ENCODE measurements at regions of chr17 and their contacts with region 1.

Region 1: GRCh38 chr17:7515911-7516610 is 31.9 kb downstream of the POLR2A start:
- DNase-seq: no peak
- ATAC-seq: no peak
- H3K4me3 ChIP-seq: no peak overlapping the region
- H3K4me3 Mint-ChIP-seq: no peak overlapping the region
- H3K27ac ChIP-seq: no peak overlapping the region
- H3K27ac Mint-ChIP-seq: peak overlapping the region in 3 of 9 donors; percentile 12 to 74 (median 45)
- H3K4me1 ChIP-seq: no peaks in the 10 kb centered on the region
- H3K4me1 Mint-ChIP-seq: peaks cover 0 to 7% (median 0%) of the 10 kb centered on the region in 7 donors
- H3K27me3 ChIP-seq: no peaks in the 10 kb centered on the region
- H3K27me3 Mint-ChIP-seq: no peaks in the 10 kb centered on the region

Region 2: GRCh38 chr17:7314719-7315569 is 201.1 kb before region 1 on chr17 and contains the start of gene GPS2:
- CTCF ChIA-PET with region 1: no interaction called
- POLR2A ChIA-PET with region 1: no interaction called
- intact Hi-C with region 1: no loop called
- DNase-seq: peak; percentile 90 to 95 (median 93)
- ATAC-seq: peak; percentile 88
- H3K4me3 ChIP-seq: peak within 1 kb of the TSS; percentile 85
- H3K4me3 Mint-ChIP-seq: peak within 1 kb of the TSS; percentile 85 to 96 (median 90)
- H3K27ac ChIP-seq: peak within 1 kb of the TSS; percentile 87
- H3K27ac Mint-ChIP-seq: peak within 1 kb of the TSS; percentile 85 to 97 (median 95)
- H3K4me1 ChIP-seq: peaks cover 30 to 35% of the 10 kb centered on the region in 2 donors
- H3K4me1 Mint-ChIP-seq: peaks cover 36 to 63% (median 54%) of the 10 kb centered on the region in 7 donors
- H3K27me3 ChIP-seq: no peaks in the 10 kb centered on the region
- H3K27me3 Mint-ChIP-seq: no peaks in the 10 kb centered on the region
- total RNA-seq, gene GPS2: 72.6 to 145 (median 107) TPM

Region 3: GRCh38 chr17:7548585-7549400 is 32.7 kb after region 1 on chr17 and contains the start of gene TNFSF12:
- CTCF ChIA-PET with region 1: interaction called, 11 read pairs
- POLR2A ChIA-PET with region 1: interaction called, 6 read pairs
- intact Hi-C with region 1: loop called in 1 of 2 experiments (anchors 5 kb)
- DNase-seq: peak in 7 of 9 donors; percentile 38 to 69 (median 45)
- ATAC-seq: peak; percentile 60
- H3K4me3 ChIP-seq: peak within 1 kb of the TSS; percentile 91
- H3K4me3 Mint-ChIP-seq: peak within 1 kb of the TSS; percentile 77 to 99 (median 91)
- H3K27ac ChIP-seq: peak within 1 kb of the TSS; percentile 70
- H3K27ac Mint-ChIP-seq: peak within 1 kb of the TSS; percentile 90 to 98 (median 94)
- H3K4me1 ChIP-seq: peaks cover 14 to 35% of the 10 kb centered on the region in 2 donors
- H3K4me1 Mint-ChIP-seq: peaks cover 46 to 60% (median 55%) of the 10 kb centered on the region in 7 donors
- H3K27me3 ChIP-seq: no peaks in the 10 kb centered on the region
- H3K27me3 Mint-ChIP-seq: peaks cover 0 to 2% (median 0%) of the 10 kb centered on the region in 5 donors
- total RNA-seq, gene TNFSF12: 27.3 to 82.4 (median 36.9) TPM

Region 4: DNA sequence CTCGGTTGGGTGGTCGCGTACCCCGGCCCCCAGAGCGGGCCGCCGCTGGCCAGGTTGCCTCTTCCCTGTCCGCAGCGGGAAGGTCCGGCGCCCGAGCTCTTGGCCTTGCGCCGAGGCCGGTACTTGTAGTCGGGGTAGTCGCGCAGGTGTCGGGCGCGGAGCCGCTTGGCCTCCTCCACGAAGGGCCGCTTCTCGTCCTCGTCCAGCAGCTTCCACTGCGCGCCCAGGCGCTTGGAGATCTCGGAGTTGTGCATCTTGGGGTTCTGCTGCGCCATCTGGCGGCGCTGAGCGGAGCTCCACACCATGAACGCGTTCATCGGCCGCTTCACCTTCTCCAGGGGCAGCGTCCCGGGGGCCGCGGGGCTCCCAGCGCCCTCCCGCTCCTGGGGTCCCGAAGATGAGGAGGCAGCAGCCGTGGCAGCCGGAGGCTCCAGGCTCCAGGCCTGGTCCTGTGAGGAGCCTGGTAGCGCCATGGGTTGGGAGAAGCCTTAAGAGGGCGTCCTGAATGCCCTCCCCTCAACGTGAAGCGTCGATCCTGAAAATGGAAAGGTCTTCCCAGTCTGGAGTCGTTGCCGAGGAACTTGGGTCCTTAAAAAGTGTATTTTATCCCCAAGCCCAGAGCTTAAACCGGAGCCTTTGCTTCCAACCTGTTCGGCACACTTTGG is 73.3 kb after region 1 on chr17:
- CTCF ChIA-PET with region 1: interaction called, 19 read pairs
- POLR2A ChIA-PET with region 1: interaction called, 5 read pairs
- intact Hi-C with region 1: loop called (anchors 1 kb)
- DNase-seq: peak; percentile 54 to 72 (median 63)
- ATAC-seq: peak; percentile 87
- H3K4me3 ChIP-seq: no peak overlapping the region
- H3K4me3 Mint-ChIP-seq: no peak overlapping the region
- H3K27ac ChIP-seq: no peak overlapping the region
- H3K27ac Mint-ChIP-seq: peak overlapping the region in 2 of 9 donors; percentile 13 to 38
- H3K4me1 ChIP-seq: peaks cover 8 to 11% of the 10 kb centered on the region in 2 donors
- H3K4me1 Mint-ChIP-seq: peaks cover 9 to 14% (median 13%) of the 10 kb centered on the region in 7 donors
- H3K27me3 ChIP-seq: no peaks in the 10 kb centered on the region
- H3K27me3 Mint-ChIP-seq: no peaks in the 10 kb centered on the region

Measured in naive thymus-derived CD4-positive, alpha-beta T cell (primary cell).